Cardiac septum (tissue), 1 donor: ENCODE measurements at regions of chr9 and their contacts with region 1.

Region 1: DNA sequence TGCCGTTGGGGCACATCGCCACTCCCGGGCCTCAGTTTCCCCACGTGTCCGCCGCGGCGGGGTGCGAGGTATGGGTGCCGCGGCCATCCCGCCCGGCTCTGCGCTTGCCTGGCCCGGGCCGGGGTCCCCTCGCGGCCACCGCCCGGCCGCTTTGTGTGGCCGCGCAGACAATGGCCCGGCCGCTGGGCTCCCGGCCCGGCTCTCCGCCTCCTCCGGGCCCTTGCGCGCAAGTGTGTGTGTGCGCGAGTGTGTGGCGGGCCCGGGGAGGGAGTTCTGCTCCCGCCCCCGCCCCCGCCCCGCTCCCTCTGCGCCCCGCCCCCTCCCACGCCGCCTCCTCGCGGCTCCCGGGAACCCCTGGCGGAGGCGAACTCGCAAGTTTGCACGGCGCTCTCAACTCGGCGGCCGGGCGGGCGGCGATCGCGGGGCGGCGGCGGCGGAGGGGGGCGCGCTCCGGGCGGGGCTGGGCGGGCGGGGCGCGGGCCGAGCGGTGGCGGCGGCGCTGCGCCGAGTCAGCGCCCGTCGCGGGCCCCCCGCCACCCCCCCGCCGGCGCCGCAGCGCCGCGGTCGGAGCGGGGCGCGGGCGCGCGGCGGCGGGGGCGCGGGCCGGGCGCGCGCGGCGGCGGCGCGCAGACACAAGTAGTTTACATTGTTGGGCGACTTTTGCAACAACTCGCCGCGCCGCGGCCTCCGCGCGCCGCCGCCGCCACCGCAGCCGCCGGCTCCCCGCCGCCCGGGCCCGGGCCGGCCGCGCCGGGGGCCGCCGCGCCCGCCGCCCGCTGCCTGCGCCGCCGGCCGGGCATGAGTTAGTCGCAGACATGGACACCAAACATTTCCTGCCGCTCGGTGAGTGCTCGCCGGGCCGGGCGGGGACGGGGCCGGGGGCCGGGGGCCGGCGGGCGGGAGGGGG is at the start of gene RXRA:
- DNase-seq: peak; percentile 91
- total RNA-seq, gene RXRA: 42.6 TPM

Region 2: GRCh38 chr9:134410069-134410847 is 84.2 kb after region 1 on chr9:
- intact Hi-C with region 1: no loop called
- DNase-seq: no peak

Region 3: GRCh38 chr9:134434894-134435506 is 108.9 kb after region 1 on chr9:
- intact Hi-C with region 1: loop called (anchors 2 kb)
- DNase-seq: peak; percentile 94